Ovary (tissue), 10 donors: ENCODE measurements at regions of chr18 and their contacts with region 1.

Region 1: DNA sequence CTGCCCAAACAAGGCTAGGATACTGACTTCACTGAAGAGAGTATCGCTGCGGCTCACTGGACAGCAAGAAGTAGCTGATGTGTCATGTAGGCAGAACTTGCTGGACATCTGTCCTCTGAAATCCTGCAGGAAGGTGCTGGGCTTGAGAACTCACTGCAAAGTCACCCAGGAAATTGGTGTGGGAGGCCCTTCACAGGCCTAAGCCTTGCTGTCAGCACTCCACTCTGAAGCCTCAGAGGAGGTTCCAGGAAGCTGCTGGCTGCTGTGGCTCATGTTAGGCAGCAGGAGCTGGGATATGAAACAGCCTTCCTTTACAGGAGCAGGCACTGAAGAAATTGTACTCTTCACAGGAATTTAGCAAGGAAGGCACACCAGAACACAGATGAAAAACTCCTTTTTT is 88.3 kb upstream of the CCDC68 start:
- DNase-seq: no peak
- H3K4me3 ChIP-seq: no peak overlapping the region
- H3K27ac ChIP-seq: no peak overlapping the region
- H3K4me1 ChIP-seq: no peaks in the 10 kb centered on the region
- H3K27me3 ChIP-seq: no peaks in the 10 kb centered on the region
- CTCF ChIP-seq: no peak
- EP300 ChIP-seq: no peak
- POLR2A ChIP-seq: no peak

Region 2: DNA sequence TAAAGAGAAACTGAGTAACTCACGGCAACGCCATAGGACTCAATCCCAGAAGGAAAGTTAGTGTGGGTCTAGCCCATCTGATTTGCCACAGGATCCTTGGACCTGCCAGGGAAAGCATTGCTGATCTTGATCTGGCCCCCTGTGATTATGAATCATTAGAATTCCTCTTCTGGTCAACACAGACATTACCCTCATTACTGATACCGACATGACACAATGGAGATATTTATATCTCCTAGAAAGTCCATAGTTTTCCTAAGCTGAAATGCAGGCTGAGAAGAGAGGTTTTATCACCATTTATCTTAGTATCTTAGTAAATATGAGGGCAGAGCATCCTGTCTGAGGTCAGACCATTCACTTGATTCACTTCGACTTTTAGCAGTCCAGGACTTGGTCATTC is 12.8 kb before region 1 on chr18:
- intact Hi-C with region 1: loop called in 1 of 4 experiments (anchors 1 kb)
- DNase-seq: no peak
- H3K4me3 ChIP-seq: no peak overlapping the region
- H3K27ac ChIP-seq: no peak overlapping the region
- H3K4me1 ChIP-seq: no peaks in the 10 kb centered on the region
- H3K27me3 ChIP-seq: no peaks in the 10 kb centered on the region
- CTCF ChIP-seq: no peak
- EP300 ChIP-seq: no peak
- POLR2A ChIP-seq: no peak

Region 3: GRCh38 chr18:55064760-55065159 is 17.2 kb after region 1 on chr18:
- intact Hi-C with region 1: no loop called
- DNase-seq: no peak
- H3K4me3 ChIP-seq: no peak overlapping the region
- H3K27ac ChIP-seq: no peak overlapping the region
- H3K4me1 ChIP-seq: no peaks in the 10 kb centered on the region
- H3K27me3 ChIP-seq: no peaks in the 10 kb centered on the region
- CTCF ChIP-seq: no peak
- EP300 ChIP-seq: no peak
- POLR2A ChIP-seq: no peak